Activated B cell treated with CpG ODN at 0.5 μM for 24 hours (primary cell): ENCODE measurements at regions of chr18 and their contacts with region 1.

Region 1: DNA sequence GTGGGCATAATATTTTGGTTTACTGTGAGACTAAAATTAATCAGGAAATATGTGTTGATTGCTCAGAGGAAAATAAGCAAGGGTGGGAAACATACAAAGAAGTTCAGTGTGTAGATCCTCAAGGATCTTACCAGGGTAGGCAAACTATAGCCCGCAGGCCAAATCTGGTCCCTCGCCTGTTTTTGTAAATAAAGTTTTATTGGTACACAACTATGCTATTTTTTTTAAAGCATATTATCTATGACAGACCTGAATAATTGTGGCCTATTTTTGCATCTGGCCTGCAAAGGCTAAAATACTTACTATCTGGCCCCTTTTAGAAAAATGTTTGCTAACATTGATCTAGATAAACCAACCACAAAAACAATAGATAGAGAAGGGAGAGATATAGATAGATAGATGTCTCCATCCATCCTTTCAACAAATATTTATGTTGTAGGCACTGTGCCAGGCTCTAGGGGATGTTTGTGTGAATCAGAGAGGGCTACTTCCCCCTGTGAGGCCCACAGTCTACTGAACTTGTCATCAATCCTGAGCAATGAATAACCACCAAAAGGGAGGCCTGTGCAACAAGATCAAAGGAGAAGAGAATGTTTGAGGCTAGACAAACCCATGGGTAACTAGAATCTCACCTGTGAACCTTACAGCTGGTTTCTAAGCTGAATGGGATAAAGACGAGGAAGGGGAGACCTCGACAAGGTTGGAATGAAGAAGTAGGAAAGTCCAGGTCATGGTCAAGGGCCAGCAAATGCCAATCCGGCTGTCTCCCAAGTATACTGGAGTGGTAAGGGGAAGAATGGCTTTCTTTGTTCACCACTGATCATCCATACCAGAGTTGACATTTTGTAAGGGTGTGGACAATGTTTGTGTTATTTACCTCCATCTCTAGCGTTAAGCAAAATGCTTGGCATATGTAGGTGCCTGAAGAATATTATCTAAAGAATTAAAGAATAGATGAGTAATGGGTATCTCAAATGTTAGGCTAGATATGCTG is 23.6 kb downstream of the ALPK2 start:
- DNase-seq: no peak
- ATAC-seq: peak; percentile 51
- H3K4me3 Mint-ChIP-seq: no peak overlapping the region
- H3K27ac Mint-ChIP-seq: no peak overlapping the region
- H3K4me1 Mint-ChIP-seq: peaks cover 31% of the 10 kb centered on the region
- H3K27me3 Mint-ChIP-seq: no peaks in the 10 kb centered on the region
- CTCF ChIP-seq: no peak

Region 2: GRCh38 chr18:58535340-58536201 is 69.8 kb before region 1 on chr18:
- CTCF ChIA-PET with region 1: no interaction called
- POLR2A ChIA-PET with region 1: no interaction called
- intact Hi-C with region 1: loop called (anchors 2 kb)
- DNase-seq: no peak
- ATAC-seq: peak; percentile 78
- H3K4me3 Mint-ChIP-seq: peak overlapping the region; percentile 63
- H3K27ac Mint-ChIP-seq: peak overlapping the region; percentile 81
- H3K4me1 Mint-ChIP-seq: peaks cover 68% of the 10 kb centered on the region
- H3K27me3 Mint-ChIP-seq: no peaks in the 10 kb centered on the region
- CTCF ChIP-seq: no peak